SK-N-SH (cell line): ENCODE measurements at regions of chr19 and their contacts with region 1.

Region 1: DNA sequence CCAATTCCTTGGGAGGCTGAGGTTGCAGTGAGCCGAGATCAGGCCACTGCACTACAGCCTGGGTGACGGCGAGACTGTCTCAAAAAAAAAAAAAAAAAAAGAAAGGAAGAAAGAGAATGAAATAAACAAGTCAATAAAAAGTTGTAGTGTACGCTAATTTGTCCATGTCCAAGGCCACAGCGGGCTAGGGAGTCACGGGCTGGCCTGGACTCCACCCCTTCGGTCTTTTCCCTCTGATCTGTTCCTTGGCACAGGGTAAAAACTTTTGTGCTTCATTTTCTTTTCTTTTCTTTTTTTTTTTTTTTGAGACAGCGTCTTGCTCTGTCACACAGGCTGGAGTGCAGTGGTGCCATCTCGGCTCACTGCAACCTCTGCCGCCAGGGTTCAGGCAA is 19.4 kb upstream of the MKNK2 start:
- DNase-seq: no peak
- H3K4me3 ChIP-seq: no peak overlapping the region
- H3K27ac ChIP-seq: no peak overlapping the region
- H3K4me1 ChIP-seq: no peaks in the 10 kb centered on the region
- H3K27me3 ChIP-seq: no peaks in the 10 kb centered on the region
- CTCF ChIP-seq: no peak
- EP300 ChIP-seq: no peak
- RAD21 ChIP-seq: no peak

Region 2: DNA sequence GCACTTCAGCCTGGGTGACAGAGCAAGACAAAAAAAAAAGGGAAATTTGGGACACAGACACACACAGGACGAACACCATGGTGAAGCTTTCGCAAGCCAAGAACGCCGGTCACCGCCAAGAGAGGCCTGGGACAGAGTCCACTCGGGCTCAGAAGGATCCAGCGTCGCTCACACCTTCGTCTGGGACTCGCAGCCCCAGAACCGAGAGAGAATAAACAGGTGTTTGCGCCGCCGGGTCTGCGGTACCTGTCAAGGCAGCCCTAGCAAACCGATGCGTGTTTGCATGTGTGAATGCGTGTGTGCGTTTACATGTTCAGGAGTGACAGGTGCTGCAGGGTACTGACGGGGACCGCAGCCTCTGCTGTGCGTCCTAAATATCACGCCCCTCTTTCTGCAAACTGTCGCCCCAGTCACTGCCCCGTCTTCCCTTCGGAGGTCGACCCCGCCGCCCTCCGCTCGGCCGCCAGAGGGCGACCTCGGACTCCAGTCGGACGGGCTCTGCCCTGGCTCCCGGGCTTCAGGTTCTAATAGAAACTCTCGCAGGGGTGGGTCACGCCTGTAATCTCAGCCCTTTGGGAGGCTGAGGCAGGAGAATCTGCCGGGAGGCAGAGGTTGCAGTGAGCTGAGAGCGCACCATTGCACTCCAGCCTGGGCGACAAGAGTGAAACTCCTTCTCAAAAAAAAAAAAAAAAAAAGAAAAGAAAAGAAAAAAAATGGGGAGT is 141.2 kb before region 1 on chr19:
- CTCF ChIA-PET with region 1: interaction called, 18 read pairs
- POLR2A ChIA-PET with region 1: no interaction called
- DNase-seq: peak; percentile 93
- H3K4me3 ChIP-seq: peak overlapping the region; percentile 36 to 64
- H3K27ac ChIP-seq: no peak overlapping the region
- H3K4me1 ChIP-seq: peaks cover 6 to 8% of the 10 kb centered on the region in 2 experiments; a peak in 2 of 4 replicates
- H3K27me3 ChIP-seq: no peaks in the 10 kb centered on the region
- CTCF ChIP-seq: peak; percentile 80
- EP300 ChIP-seq: no peak
- RAD21 ChIP-seq: peak; percentile 69

Region 3: GRCh38 chr19:2021453-2022140 is 48.8 kb before region 1 on chr19:
- CTCF ChIA-PET with region 1: interaction called, 43 read pairs
- POLR2A ChIA-PET with region 1: no interaction called
- DNase-seq: no peak
- H3K4me3 ChIP-seq: no peak overlapping the region
- H3K27ac ChIP-seq: no peak overlapping the region
- H3K4me1 ChIP-seq: peaks cover 0 to 4% of the 10 kb centered on the region in 2 experiments; a peak in 1 of 4 replicates
- H3K27me3 ChIP-seq: no peaks in the 10 kb centered on the region
- CTCF ChIP-seq: no peak
- EP300 ChIP-seq: no peak
- RAD21 ChIP-seq: no peak

Region 4: GRCh38 chr19:2050991-2051772 is 19.2 kb before region 1 on chr19 and contains the start of gene MKNK2:
- CTCF ChIA-PET with region 1: interaction called, 11 read pairs
- POLR2A ChIA-PET with region 1: interaction called, 4 read pairs
- DNase-seq: peak; percentile 99
- H3K4me3 ChIP-seq: peak within 1 kb of the TSS; percentile 90 to 94
- H3K27ac ChIP-seq: peak within 1 kb of the TSS; percentile 37 to 88; a peak in 3 of 4 replicates
- H3K4me1 ChIP-seq: peaks cover 29 to 57% of the 10 kb centered on the region in 2 experiments; a peak in 3 of 4 replicates
- H3K27me3 ChIP-seq: no peaks in the 10 kb centered on the region
- CTCF ChIP-seq: peak; percentile 40
- EP300 ChIP-seq: no peak
- RAD21 ChIP-seq: no peak
- polyA plus RNA-seq, gene MKNK2: 58.9 and 65.4 TPM in 2 replicates

Region 5: DNA sequence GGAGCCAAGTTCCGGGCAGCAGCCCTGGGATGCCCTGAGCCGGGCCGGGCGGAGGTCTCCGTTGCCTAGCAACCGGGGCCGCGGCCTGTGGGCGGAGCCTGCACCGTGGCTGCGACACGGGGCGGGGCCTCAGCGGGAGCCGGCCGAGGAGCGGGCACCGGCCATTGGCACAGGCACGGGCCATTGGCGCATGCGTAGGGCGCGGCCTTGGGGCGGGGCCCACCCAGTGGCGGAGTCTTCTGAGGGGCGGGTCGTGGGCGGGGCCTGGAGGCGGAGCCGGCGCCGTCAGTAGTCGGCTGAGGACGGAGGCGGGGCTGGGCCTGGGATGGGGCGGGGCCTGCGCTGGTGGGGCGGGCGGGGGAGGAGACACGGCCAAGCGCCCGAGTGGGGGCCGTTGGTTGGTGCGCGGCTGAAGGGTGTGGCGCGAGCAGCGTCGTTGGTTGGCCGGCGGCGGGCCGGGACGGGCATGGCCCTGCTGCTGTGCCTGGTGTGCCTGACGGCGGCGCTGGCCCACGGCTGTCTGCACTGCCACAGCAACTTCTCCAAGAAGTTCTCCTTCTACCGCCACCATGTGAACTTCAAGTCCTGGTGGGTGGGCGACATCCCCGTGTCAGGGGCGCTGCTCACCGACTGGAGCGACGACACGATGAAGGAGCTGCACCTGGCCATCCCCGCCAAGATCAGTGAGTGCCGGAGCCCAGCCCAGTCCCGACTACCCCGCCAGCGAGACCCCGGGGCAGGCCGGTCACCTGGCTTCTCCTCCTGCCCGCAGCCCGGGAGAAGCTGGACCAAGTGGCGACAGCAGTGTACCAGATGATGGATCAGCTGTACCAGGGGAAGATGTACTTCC is 26.3 kb after region 1 on chr19 and contains the start of gene IZUMO4:
- CTCF ChIA-PET with region 1: interaction called, 15 read pairs
- POLR2A ChIA-PET with region 1: no interaction called
- DNase-seq: peak; percentile 99
- H3K4me3 ChIP-seq: peak within 1 kb of the TSS; percentile 56 to 92
- H3K27ac ChIP-seq: peak within 1 kb of the TSS; percentile 82 to 92
- H3K4me1 ChIP-seq: peaks cover 3 to 17% of the 10 kb centered on the region in 2 experiments; a peak in 1 of 4 replicates
- H3K27me3 ChIP-seq: no peaks in the 10 kb centered on the region
- CTCF ChIP-seq: peak; percentile 46
- EP300 ChIP-seq: no peak
- RAD21 ChIP-seq: peak; percentile 30; the same call in 1 of the 2 replicates
- polyA plus RNA-seq, gene IZUMO4: 4.6 and 10.3 TPM in 2 replicates